Pancreas (tissue), 10 donors: ENCODE measurements at regions of chr14 and their contacts with region 1.

Region 1: GRCh38 chr14:99636487-99636886 is 8.4 kb upstream of the HHIPL1 start:
- DNase-seq: no peak
- ATAC-seq: no peak
- H3K4me3 ChIP-seq: no peak overlapping the region
- H3K27ac ChIP-seq: no peak overlapping the region
- H3K4me1 ChIP-seq: no peaks in the 10 kb centered on the region
- H3K27me3 ChIP-seq: no peaks in the 10 kb centered on the region
- CTCF ChIP-seq: no peak

Region 2: DNA sequence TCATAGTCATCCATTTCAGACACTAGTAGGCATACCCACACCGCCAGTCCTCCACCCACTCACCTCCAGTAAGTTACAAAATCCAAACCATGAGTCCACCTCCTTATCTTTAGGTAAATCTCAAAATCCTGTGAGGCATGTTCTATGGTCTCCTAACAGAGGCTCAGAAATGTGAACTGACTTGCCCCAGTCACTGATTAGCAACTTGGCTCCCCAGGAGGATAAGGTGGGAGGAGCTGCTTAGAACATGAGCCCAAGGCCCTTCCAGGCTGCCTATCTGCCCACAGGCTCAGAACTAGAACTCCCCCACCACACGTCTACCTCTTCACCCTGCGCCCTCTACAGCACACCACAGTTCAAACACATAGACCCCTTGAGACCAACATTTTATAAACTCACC is 175.7 kb before region 1 on chr14:
- intact Hi-C with region 1: no loop called
- DNase-seq: no peak
- ATAC-seq: no peak
- H3K4me3 ChIP-seq: no peak overlapping the region
- H3K27ac ChIP-seq: no peak overlapping the region
- H3K4me1 ChIP-seq: no peaks in the 10 kb centered on the region
- H3K27me3 ChIP-seq: no peaks in the 10 kb centered on the region
- CTCF ChIP-seq: no peak

Region 3: GRCh38 chr14:99524804-99525698 is 111.4 kb before region 1 on chr14:
- intact Hi-C with region 1: loop called in 2 of 3 experiments (anchors 2 to 10 kb)
- DNase-seq: no peak
- ATAC-seq: peak; percentile 15 to 52 (median 42)
- H3K4me3 ChIP-seq: no peak overlapping the region
- H3K27ac ChIP-seq: no peak overlapping the region
- H3K4me1 ChIP-seq: no peaks in the 10 kb centered on the region
- H3K27me3 ChIP-seq: no peaks in the 10 kb centered on the region
- CTCF ChIP-seq: no peak